IMR-90 (cell line): ENCODE measurements at regions of chr2 and their contacts with region 1.

Region 1: DNA sequence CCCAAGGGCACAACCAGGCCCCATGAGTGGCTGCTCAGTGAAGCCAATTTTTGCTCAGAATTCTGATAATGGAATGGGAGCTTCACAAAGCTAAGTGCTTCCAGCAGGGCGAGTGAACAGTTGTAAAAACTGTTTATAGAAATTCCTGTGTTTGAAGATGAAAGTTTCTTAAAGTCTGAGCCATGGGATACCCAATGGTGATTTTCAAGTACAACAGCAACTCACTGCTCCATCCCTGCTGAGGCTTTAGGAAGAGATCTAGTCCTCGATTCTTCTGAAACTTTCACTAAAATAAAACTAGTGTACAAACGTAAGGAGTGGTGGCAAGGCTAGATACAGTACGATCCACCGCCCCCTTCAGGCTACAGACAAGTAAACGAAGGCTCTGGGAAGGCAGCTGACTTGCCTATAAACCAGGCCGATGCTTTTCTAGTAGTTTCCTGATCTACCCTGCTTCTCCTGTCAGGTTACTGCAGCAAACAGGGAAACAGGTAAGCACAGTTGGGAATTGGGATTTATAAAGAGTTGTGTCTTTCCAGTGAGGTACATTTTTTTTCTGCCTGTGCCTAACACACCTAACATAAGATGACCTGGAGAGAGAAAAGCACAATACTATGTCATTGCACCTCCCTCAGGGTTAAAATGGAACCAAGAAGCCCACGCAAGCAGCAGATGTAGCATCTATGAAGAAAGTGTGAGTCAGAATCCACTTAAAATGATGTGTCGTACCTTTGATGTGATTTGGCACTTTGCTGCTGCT is 108.7 kb downstream of the UXS1 start:
- DNase-seq: peak; percentile 39
- ATAC-seq: peak; percentile 92
- H3K4me3 ChIP-seq: no peak overlapping the region
- H3K27ac ChIP-seq: no peak overlapping the region
- H3K4me1 ChIP-seq: no peaks in the 10 kb centered on the region
- H3K27me3 ChIP-seq: peaks cover 10% of the 10 kb centered on the region
- CTCF ChIP-seq: peak; percentile 50
- POLR2A ChIP-seq: no peak
- RAD21 ChIP-seq: peak; percentile 53

Region 2: GRCh38 chr2:105576440-105577252 is 508.7 kb before region 1 on chr2:
- CTCF ChIA-PET with region 1: interaction called, 3 read pairs
- POLR2A ChIA-PET with region 1: no interaction called
- dilution Hi-C with region 1: no loop called
- in situ Hi-C with region 1: no loop called
- intact Hi-C with region 1: loop called (anchors 2 kb)
- DNase-seq: peak; percentile 42
- ATAC-seq: peak; percentile 77
- H3K4me3 ChIP-seq: no peak overlapping the region
- H3K27ac ChIP-seq: no peak overlapping the region
- H3K4me1 ChIP-seq: peaks cover 4% of the 10 kb centered on the region; the same call in 1 of the 2 replicates
- H3K27me3 ChIP-seq: peaks cover 22% of the 10 kb centered on the region
- CTCF ChIP-seq: peak; percentile 49
- POLR2A ChIP-seq: no peak
- RAD21 ChIP-seq: peak; percentile 54

Region 3: GRCh38 chr2:105919826-105920225 is 165.5 kb before region 1 on chr2:
- CTCF ChIA-PET with region 1: no interaction called
- POLR2A ChIA-PET with region 1: no interaction called
- dilution Hi-C with region 1: no loop called
- in situ Hi-C with region 1: no loop called
- intact Hi-C with region 1: loop called (anchors 5 kb)
- DNase-seq: peak; percentile 62
- ATAC-seq: peak; percentile 35; the same call in 1 of the 2 replicates
- H3K4me3 ChIP-seq: no peak overlapping the region
- H3K27ac ChIP-seq: no peak overlapping the region
- H3K4me1 ChIP-seq: no peaks in the 10 kb centered on the region
- H3K27me3 ChIP-seq: peaks cover 7% of the 10 kb centered on the region
- CTCF ChIP-seq: peak; percentile 40
- POLR2A ChIP-seq: no peak
- RAD21 ChIP-seq: peak; percentile 20; the same call in 1 of the 2 replicates